ENCODE measurements at regions of chrX and their contacts with region 1.

Region 1: GRCh38 chrX:150693775-150694574 is 779 bp downstream of the MTMR1 start:
- DNase-seq: peak; percentile 12 to 65 (median 51)
- ATAC-seq: peak; percentile 62
- H3K4me3 ChIP-seq: peak overlapping the region; percentile 61
- H3K4me3 Mint-ChIP-seq: peak overlapping the region; percentile 85 to 98 (median 94)
- H3K27ac ChIP-seq: peak overlapping the region; percentile 80
- H3K27ac Mint-ChIP-seq: peak overlapping the region; percentile 95 to 99 (median 97)
- H3K4me1 ChIP-seq: peaks cover 37 to 42% of the 10 kb centered on the region in 2 donors
- H3K4me1 Mint-ChIP-seq: peaks cover 25 to 68% (median 61%) of the 10 kb centered on the region in 7 donors
- H3K27me3 ChIP-seq: no peaks in the 10 kb centered on the region
- H3K27me3 Mint-ChIP-seq: no peaks in the 10 kb centered on the region

Region 2: GRCh38 chrX:149938427-149939270 is 755.3 kb before region 1 on chrX and contains the start of gene EOLA2:
- CTCF ChIA-PET with region 1: interaction called, 5 read pairs
- POLR2A ChIA-PET with region 1: interaction called, 9 read pairs
- intact Hi-C with region 1: loop called in 1 of 2 experiments (anchors 10 kb)
- DNase-seq: peak; percentile 67 to 96 (median 92)
- ATAC-seq: peak; percentile 67
- H3K4me3 ChIP-seq: peak within 1 kb of the TSS; percentile 57
- H3K4me3 Mint-ChIP-seq: peak within 1 kb of the TSS; percentile 81 to 98 (median 92)
- H3K27ac ChIP-seq: peak within 1 kb of the TSS; percentile 90
- H3K27ac Mint-ChIP-seq: peak within 1 kb of the TSS; percentile 92 to 99 (median 99)
- H3K4me1 ChIP-seq: peaks cover 5% of the 10 kb centered on the region in 2 donors
- H3K4me1 Mint-ChIP-seq: peaks cover 0 to 7% (median 0%) of the 10 kb centered on the region in 7 donors
- H3K27me3 ChIP-seq: no peaks in the 10 kb centered on the region
- H3K27me3 Mint-ChIP-seq: no peaks in the 10 kb centered on the region
- total RNA-seq, gene EOLA2: 43.1 to 59.1 (median 45.4) TPM

Region 3: GRCh38 chrX:150049647-150050046 is 644.3 kb before region 1 on chrX:
- CTCF ChIA-PET with region 1: no interaction called
- POLR2A ChIA-PET with region 1: no interaction called
- intact Hi-C with region 1: no loop called
- DNase-seq: no peak
- ATAC-seq: no peak
- H3K4me3 ChIP-seq: no peak overlapping the region
- H3K4me3 Mint-ChIP-seq: no peak overlapping the region
- H3K27ac ChIP-seq: no peak overlapping the region
- H3K27ac Mint-ChIP-seq: no peak overlapping the region
- H3K4me1 ChIP-seq: no peaks in the 10 kb centered on the region
- H3K4me1 Mint-ChIP-seq: no peaks in the 10 kb centered on the region
- H3K27me3 ChIP-seq: no peaks in the 10 kb centered on the region
- H3K27me3 Mint-ChIP-seq: peaks cover 9 to 26% (median 12%) of the 10 kb centered on the region in 5 donors

Region 4: GRCh38 chrX:150504397-150505182 is 189.4 kb before region 1 on chrX:
- CTCF ChIA-PET with region 1: no interaction called
- POLR2A ChIA-PET with region 1: no interaction called
- intact Hi-C with region 1: no loop called
- DNase-seq: no peak
- ATAC-seq: no peak
- H3K4me3 ChIP-seq: no peak overlapping the region
- H3K4me3 Mint-ChIP-seq: no peak overlapping the region
- H3K27ac ChIP-seq: no peak overlapping the region
- H3K27ac Mint-ChIP-seq: no peak overlapping the region
- H3K4me1 ChIP-seq: no peaks in the 10 kb centered on the region
- H3K4me1 Mint-ChIP-seq: peaks cover 0 to 10% (median 0%) of the 10 kb centered on the region in 7 donors
- H3K27me3 ChIP-seq: no peaks in the 10 kb centered on the region
- H3K27me3 Mint-ChIP-seq: no peaks in the 10 kb centered on the region

Region 5: DNA sequence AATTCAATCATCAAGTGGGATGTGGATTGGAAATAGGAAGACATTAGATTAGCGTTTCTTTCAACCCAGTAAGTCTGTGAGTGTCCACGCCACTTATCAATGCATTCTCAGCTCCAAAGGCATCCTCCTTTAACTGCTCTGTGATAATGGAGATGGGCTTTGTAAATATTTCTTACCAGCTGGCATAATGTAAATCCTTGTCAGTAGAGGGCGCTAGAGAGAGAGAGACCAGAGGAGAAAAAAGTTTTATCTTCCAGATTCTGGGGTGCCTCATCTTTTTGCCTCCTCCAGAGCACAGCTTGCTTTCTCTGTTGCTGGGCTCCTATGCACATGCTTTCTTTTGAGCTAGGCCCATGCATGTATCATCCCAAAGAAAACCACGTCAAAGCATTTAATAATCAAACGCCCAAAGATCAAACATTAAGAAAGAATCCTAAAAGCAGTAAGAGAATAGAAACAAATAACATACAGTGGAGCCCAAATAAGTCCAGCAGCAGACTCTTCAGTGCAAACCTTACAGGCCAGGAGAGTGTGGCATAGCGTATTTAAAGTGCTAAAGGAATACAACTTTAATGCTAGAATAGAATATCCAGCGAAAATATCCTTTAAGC is 10.3 kb before region 1 on chrX:
- CTCF ChIA-PET with region 1: interaction called, 10 read pairs
- POLR2A ChIA-PET with region 1: interaction called, 15 read pairs
- intact Hi-C with region 1: loop called (anchors 1 kb)
- DNase-seq: peak in 7 of 9 donors; percentile 36 to 68 (median 60)
- ATAC-seq: peak; percentile 72
- H3K4me3 ChIP-seq: no peak overlapping the region
- H3K4me3 Mint-ChIP-seq: no peak overlapping the region
- H3K27ac ChIP-seq: no peak overlapping the region
- H3K27ac Mint-ChIP-seq: peak overlapping the region in 2 of 9 donors; percentile 32 to 42
- H3K4me1 ChIP-seq: peaks cover 0 to 6% of the 10 kb centered on the region in 2 donors
- H3K4me1 Mint-ChIP-seq: peaks cover 8 to 32% (median 12%) of the 10 kb centered on the region in 7 donors
- H3K27me3 ChIP-seq: no peaks in the 10 kb centered on the region
- H3K27me3 Mint-ChIP-seq: no peaks in the 10 kb centered on the region

Region 6: DNA sequence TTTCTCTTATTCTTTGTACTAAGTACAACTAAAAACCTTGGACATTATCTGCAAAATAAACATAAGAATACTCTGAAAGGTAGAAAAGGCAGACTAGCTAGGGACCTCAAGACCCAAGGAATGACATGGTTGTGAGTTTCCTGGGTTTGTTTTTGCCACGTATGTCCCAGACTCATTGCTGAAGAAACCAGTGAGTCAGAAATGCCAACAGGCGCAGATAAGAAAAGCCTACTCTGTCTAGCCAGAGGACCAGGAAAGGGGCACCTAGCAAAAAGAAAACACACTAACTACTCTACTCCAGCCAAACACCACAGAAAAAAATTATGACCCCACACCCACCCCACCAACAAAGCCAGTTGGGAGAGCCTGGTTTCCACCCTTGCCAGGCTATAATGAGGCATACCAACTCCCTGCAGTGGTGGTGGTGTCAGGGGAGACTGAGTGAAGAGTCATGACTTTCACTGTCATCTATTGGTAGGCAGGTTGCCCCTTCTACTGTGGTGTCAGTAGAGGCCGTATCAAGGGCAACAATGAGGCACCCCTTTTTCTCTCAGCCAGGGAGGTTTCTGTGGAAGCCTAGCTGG is 10.1 kb after region 1 on chrX:
- CTCF ChIA-PET with region 1: interaction called, 4 read pairs
- POLR2A ChIA-PET with region 1: interaction called, 21 read pairs
- intact Hi-C with region 1: loop called in 1 of 2 experiments (anchors 1 kb)
- DNase-seq: no peak
- ATAC-seq: no peak
- H3K4me3 ChIP-seq: no peak overlapping the region
- H3K4me3 Mint-ChIP-seq: no peak overlapping the region
- H3K27ac ChIP-seq: no peak overlapping the region
- H3K27ac Mint-ChIP-seq: peak overlapping the region in 5 of 9 donors; percentile 14 to 84 (median 63)
- H3K4me1 ChIP-seq: no peaks in the 10 kb centered on the region
- H3K4me1 Mint-ChIP-seq: peaks cover 0 to 52% (median 30%) of the 10 kb centered on the region in 7 donors
- H3K27me3 ChIP-seq: no peaks in the 10 kb centered on the region
- H3K27me3 Mint-ChIP-seq: no peaks in the 10 kb centered on the region

Measured in naive thymus-derived CD4-positive, alpha-beta T cell (primary cell).